MCF 10A (cell line): ENCODE measurements at regions of chr2 and their contacts with region 1.

Region 1: GRCh38 chr2:217650716-217651360 is 352.0 kb downstream of the TNS1 start:
- DNase-seq: peak; percentile 77
- H3K4me3 Mint-ChIP-seq: no peak overlapping the region
- H3K27ac Mint-ChIP-seq: peak overlapping the region; percentile 3
- H3K4me1 Mint-ChIP-seq: peaks cover 13% of the 10 kb centered on the region
- H3K27me3 Mint-ChIP-seq: no peaks in the 10 kb centered on the region
- CTCF ChIP-seq: peak; percentile 69

Region 2: DNA sequence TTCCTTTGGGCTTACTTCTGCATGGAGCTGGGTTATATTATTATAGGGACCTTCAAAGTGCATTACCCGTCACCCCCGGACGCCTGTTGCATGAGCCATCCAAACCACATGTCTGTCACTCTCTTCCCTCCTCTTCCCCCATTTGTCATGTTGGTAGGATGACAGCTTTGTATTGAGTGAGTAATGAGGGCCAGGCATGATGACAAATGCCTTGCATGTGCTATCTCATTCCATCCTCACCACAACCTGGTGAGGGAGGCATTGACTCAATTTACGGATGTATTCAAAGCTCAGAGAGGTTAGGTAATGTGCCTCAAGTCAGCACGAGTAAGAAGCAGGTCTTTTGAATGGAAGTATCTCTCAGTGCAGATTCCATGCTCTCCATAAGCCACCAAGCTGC is 280.4 kb before region 1 on chr2:
- CTCF ChIA-PET with region 1: no interaction called
- POLR2A ChIA-PET with region 1: no interaction called
- intact Hi-C with region 1: loop called (anchors 5 kb)
- DNase-seq: peak; percentile 75
- H3K4me3 Mint-ChIP-seq: no peak overlapping the region
- H3K27ac Mint-ChIP-seq: no peak overlapping the region
- H3K4me1 Mint-ChIP-seq: peaks cover 12% of the 10 kb centered on the region
- H3K27me3 Mint-ChIP-seq: no peaks in the 10 kb centered on the region
- CTCF ChIP-seq: no peak

Region 3: DNA sequence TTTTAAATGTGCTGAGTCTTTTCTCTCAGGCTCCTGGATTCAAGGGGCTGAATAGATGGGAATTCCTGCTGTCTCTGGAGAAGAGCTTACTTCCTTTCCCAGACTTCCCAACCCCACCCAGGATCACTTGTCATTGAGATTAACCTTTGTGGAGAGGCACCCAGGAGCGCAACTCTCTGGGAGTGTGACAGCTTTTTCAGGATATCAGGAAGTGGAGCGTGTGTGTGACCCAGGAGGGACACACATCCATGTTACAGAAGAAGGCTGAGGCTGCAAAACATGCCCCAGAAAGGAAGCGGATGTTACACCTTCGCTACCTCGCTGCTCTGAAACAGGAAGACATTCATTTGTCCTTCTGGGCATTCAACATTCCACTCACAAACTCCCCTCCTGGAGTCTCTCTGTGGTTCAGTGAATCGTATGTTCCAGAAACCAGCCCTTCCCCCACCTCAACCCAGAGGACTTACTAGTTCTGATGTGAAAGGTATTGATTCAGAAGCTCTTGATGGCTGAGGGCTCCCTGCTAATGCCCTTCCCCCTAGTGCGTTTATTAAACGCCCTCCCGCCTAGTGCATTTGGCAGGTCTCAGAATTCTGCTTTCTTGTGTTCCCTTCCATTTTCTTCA is 171.9 kb before region 1 on chr2:
- CTCF ChIA-PET with region 1: no interaction called
- POLR2A ChIA-PET with region 1: no interaction called
- intact Hi-C with region 1: no loop called
- DNase-seq: no peak
- H3K4me3 Mint-ChIP-seq: no peak overlapping the region
- H3K27ac Mint-ChIP-seq: no peak overlapping the region
- H3K4me1 Mint-ChIP-seq: no peaks in the 10 kb centered on the region
- H3K27me3 Mint-ChIP-seq: peaks cover 16% of the 10 kb centered on the region
- CTCF ChIP-seq: no peak

Region 4: GRCh38 chr2:217585362-217585761 is 65.5 kb before region 1 on chr2:
- CTCF ChIA-PET with region 1: no interaction called
- POLR2A ChIA-PET with region 1: no interaction called
- intact Hi-C with region 1: no loop called
- DNase-seq: no peak
- H3K4me3 Mint-ChIP-seq: no peak overlapping the region
- H3K27ac Mint-ChIP-seq: no peak overlapping the region
- H3K4me1 Mint-ChIP-seq: no peaks in the 10 kb centered on the region
- H3K27me3 Mint-ChIP-seq: peaks cover 81% of the 10 kb centered on the region
- CTCF ChIP-seq: no peak

Region 5: GRCh38 chr2:217632043-217632442 is 18.8 kb before region 1 on chr2:
- CTCF ChIA-PET with region 1: interaction called, 46 read pairs
- POLR2A ChIA-PET with region 1: no interaction called
- intact Hi-C with region 1: no loop called
- DNase-seq: no peak
- H3K4me3 Mint-ChIP-seq: no peak overlapping the region
- H3K27ac Mint-ChIP-seq: no peak overlapping the region
- H3K4me1 Mint-ChIP-seq: no peaks in the 10 kb centered on the region
- H3K27me3 Mint-ChIP-seq: peaks cover 21% of the 10 kb centered on the region
- CTCF ChIP-seq: no peak

Region 6: GRCh38 chr2:217666338-217666737 is 15.5 kb after region 1 on chr2:
- CTCF ChIA-PET with region 1: interaction called, 23 read pairs
- POLR2A ChIA-PET with region 1: interaction called, 3 read pairs
- intact Hi-C with region 1: no loop called
- DNase-seq: peak; percentile 15
- H3K4me3 Mint-ChIP-seq: no peak overlapping the region
- H3K27ac Mint-ChIP-seq: no peak overlapping the region
- H3K4me1 Mint-ChIP-seq: peaks cover 5% of the 10 kb centered on the region
- H3K27me3 Mint-ChIP-seq: no peaks in the 10 kb centered on the region
- CTCF ChIP-seq: no peak

Region 7: GRCh38 chr2:217685255-217685605 is 34.4 kb after region 1 on chr2:
- CTCF ChIA-PET with region 1: interaction called, 13 read pairs
- POLR2A ChIA-PET with region 1: interaction called, 4 read pairs
- intact Hi-C with region 1: loop called (anchors 2 kb)
- DNase-seq: peak; percentile 96
- H3K4me3 Mint-ChIP-seq: no peak overlapping the region
- H3K27ac Mint-ChIP-seq: peak overlapping the region; percentile 4
- H3K4me1 Mint-ChIP-seq: peaks cover 24% of the 10 kb centered on the region
- H3K27me3 Mint-ChIP-seq: no peaks in the 10 kb centered on the region
- CTCF ChIP-seq: no peak